ENCODE measurements at regions of chr9 and their contacts with region 1.

Region 1: GRCh38 chr9:84404095-84404686 is 63.6 kb upstream of the SLC28A3 start:
- DNase-seq: no peak
- ATAC-seq: peak in 1 of 2 donors; percentile 26
- H3K4me3 ChIP-seq: no peak overlapping the region
- H3K27ac ChIP-seq: no peak overlapping the region
- H3K4me1 ChIP-seq: no peaks in the 10 kb centered on the region
- H3K27me3 ChIP-seq: no peaks in the 10 kb centered on the region

Region 2: DNA sequence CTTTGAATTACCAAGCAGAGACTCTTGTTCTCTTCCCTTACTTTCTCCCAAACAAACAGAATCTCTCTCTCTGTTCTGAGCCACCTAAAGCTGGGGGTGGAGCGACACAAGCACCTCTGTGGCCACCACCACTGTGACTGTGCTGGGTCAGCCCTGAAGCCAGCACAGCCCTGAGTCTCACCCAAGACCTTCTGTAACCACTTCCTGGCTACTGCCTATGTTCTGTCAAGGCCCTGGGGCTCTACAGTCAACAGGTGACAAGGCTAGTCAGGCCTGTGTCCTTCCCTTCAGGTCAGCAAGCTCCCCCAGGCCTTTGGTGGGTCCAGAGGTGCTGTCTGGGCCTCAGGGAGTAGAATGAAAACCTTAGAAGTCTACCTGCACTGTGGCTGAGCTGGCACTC is 37.5 kb before region 1 on chr9:
- intact Hi-C with region 1: no loop called
- DNase-seq: no peak
- ATAC-seq: no peak
- H3K4me3 ChIP-seq: no peak overlapping the region
- H3K27ac ChIP-seq: no peak overlapping the region
- H3K4me1 ChIP-seq: no peaks in the 10 kb centered on the region
- H3K27me3 ChIP-seq: no peaks in the 10 kb centered on the region

Region 3: GRCh38 chr9:84500218-84500617 is 96.0 kb after region 1 on chr9:
- intact Hi-C with region 1: no loop called
- DNase-seq: no peak
- ATAC-seq: no peak
- H3K4me3 ChIP-seq: no peak overlapping the region
- H3K27ac ChIP-seq: no peak overlapping the region
- H3K4me1 ChIP-seq: no peaks in the 10 kb centered on the region
- H3K27me3 ChIP-seq: no peaks in the 10 kb centered on the region

Region 4: GRCh38 chr9:85258823-85259370 is 854.7 kb after region 1 on chr9:
- intact Hi-C with region 1: loop called in 3 of 4 experiments (anchors 5 to 10 kb)
- DNase-seq: peak; percentile 53 to 74 (median 72)
- ATAC-seq: peak; percentile 83 to 88
- H3K4me3 ChIP-seq: no peak overlapping the region
- H3K27ac ChIP-seq: no peak overlapping the region
- H3K4me1 ChIP-seq: no peaks in the 10 kb centered on the region
- H3K27me3 ChIP-seq: no peaks in the 10 kb centered on the region

Region 5: DNA sequence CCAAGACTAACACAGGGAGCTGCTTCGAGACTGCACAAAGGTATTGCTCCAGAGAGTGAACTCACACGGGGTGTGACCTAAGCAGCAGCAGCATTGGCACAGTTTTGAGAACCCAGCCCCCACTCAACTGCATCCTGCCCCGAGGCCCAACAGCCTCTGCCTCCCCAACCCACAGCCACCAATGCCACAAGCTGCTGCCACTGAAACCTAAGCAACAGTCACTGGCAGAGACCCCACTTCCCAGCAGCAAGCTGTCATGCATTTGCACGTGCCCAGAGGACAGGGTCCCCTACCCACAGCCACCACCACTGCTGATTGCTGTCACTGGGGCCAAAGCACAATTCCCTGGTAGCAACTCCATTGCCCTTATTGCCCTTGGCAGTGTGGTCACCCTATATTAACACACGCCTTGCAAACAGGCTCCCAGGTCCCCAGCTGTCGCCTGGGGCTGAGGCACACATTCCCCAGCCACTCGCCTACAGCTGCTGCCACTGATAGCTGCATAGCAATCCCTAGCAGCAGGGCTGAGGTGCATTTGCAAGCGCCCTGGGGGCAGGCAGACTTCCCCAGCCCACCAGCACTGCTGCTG is 1196.6 kb after region 1 on chr9:
- intact Hi-C with region 1: loop called in 2 of 4 experiments (anchors 10 kb)
- DNase-seq: peak in 2 of 3 donors; percentile 20 to 51
- ATAC-seq: peak; percentile 20 to 50
- H3K4me3 ChIP-seq: no peak overlapping the region
- H3K27ac ChIP-seq: peak overlapping the region; percentile 1
- H3K4me1 ChIP-seq: no peaks in the 10 kb centered on the region
- H3K27me3 ChIP-seq: no peaks in the 10 kb centered on the region

Measured in right cardiac atrium (tissue), 5 donors.